ENCODE measurements at regions of chr11 and their contacts with region 1.

Region 1: GRCh38 chr11:12921580-12922157 is 87.4 kb upstream of the RASSF10 start:
- DNase-seq: no peak
- H3K4me3 ChIP-seq: no peak overlapping the region
- H3K27ac ChIP-seq: no peak overlapping the region
- H3K4me1 ChIP-seq: no peaks in the 10 kb centered on the region
- H3K27me3 ChIP-seq: no peaks in the 10 kb centered on the region
- CTCF ChIP-seq: no peak

Region 2: GRCh38 chr11:12458042-12458441 is 463.6 kb before region 1 on chr11:
- CTCF ChIA-PET with region 1: no interaction called
- POLR2A ChIA-PET with region 1: interaction called, 18 read pairs
- intact Hi-C with region 1: no loop called
- DNase-seq: no peak
- H3K4me3 ChIP-seq: no peak overlapping the region
- H3K27ac ChIP-seq: no peak overlapping the region
- H3K4me1 ChIP-seq: no peaks in the 10 kb centered on the region
- H3K27me3 ChIP-seq: no peaks in the 10 kb centered on the region
- CTCF ChIP-seq: no peak

Measured in A673 (cell line).